Activated naive CD4-positive, alpha-beta T cell treated with anti-CD3 and anti-CD28 coated beads for 36 hours (primary cell): ENCODE measurements at regions of chr6 and their contacts with region 1.

Region 1: DNA sequence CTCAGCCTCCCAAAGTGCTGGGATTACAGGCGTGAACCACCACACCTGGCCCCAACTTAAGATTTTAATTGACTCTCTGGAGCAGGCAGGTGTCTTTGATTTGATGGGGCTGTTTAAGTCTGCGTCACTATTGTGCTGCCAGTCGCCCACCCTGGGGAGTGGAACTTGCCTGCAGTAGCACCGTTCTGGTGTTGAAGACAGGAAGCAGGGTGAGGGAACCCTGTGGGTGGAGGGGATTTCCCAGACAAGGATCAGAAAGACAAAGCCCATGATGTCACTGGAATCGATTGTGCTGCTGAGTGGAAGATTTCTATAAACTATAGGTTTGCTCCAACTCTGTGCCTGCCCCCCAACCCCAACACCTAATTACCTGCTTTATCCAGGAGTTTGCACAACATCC is 11.0 kb downstream of the ALDH8A1 start:
- DNase-seq: peak; percentile 85
- H3K4me3 Mint-ChIP-seq: no peak overlapping the region
- H3K27ac Mint-ChIP-seq: no peak overlapping the region
- H3K4me1 Mint-ChIP-seq: peaks cover 21% of the 10 kb centered on the region
- H3K27me3 Mint-ChIP-seq: no peaks in the 10 kb centered on the region

Region 2: DNA sequence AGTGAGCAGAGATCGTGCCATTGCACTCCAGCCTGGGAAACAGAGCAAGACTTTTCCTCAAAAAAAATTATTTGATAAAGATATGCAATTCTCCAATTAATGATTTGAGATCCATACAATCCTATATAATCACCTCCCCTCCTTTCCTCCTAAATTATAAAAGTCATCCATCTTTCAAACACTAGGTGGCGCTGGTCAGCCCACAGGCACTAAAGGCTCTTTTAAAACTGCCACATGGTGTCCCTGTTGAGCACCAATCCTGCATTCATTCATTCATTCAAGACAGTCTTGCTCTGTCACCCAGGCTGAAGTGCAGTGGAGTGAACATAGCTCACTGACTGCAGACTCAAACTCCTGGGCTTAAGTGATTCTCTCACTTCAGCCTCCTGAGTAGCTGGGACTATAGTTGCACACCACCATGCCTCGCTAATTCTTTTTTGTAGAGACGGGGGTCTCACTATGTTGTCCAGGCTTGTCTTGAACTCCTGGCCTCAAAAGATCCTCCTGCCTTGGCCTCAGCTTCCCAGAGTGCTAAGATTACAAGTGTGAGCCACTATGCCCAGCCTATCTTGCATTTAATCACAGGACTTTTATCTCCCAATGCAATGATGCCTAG is 827.7 kb before region 1 on chr6:
- CTCF ChIA-PET with region 1: interaction called, 18 read pairs
- intact Hi-C with region 1: loop called (anchors 1 kb)
- DNase-seq: peak; percentile 65
- H3K4me3 Mint-ChIP-seq: no peak overlapping the region
- H3K27ac Mint-ChIP-seq: no peak overlapping the region
- H3K4me1 Mint-ChIP-seq: peaks cover 2% of the 10 kb centered on the region
- H3K27me3 Mint-ChIP-seq: peaks cover 11% of the 10 kb centered on the region

Region 3: GRCh38 chr6:134161036-134161435 is 777.9 kb before region 1 on chr6:
- CTCF ChIA-PET with region 1: interaction called, 23 read pairs
- intact Hi-C with region 1: loop called (anchors 1 kb)
- DNase-seq: no peak
- H3K4me3 Mint-ChIP-seq: no peak overlapping the region
- H3K27ac Mint-ChIP-seq: no peak overlapping the region
- H3K4me1 Mint-ChIP-seq: peaks cover 4% of the 10 kb centered on the region
- H3K27me3 Mint-ChIP-seq: no peaks in the 10 kb centered on the region

Region 4: GRCh38 chr6:134882426-134883038 is 56.4 kb before region 1 on chr6:
- CTCF ChIA-PET with region 1: interaction called, 36 read pairs
- intact Hi-C with region 1: loop called (anchors 2 kb)
- DNase-seq: peak; percentile 80
- H3K4me3 Mint-ChIP-seq: no peak overlapping the region
- H3K27ac Mint-ChIP-seq: no peak overlapping the region
- H3K4me1 Mint-ChIP-seq: no peaks in the 10 kb centered on the region
- H3K27me3 Mint-ChIP-seq: peaks cover 10% of the 10 kb centered on the region

Region 5: GRCh38 chr6:135438907-135439535 is 500.1 kb after region 1 on chr6:
- CTCF ChIA-PET with region 1: interaction called, 4 read pairs
- intact Hi-C with region 1: loop called (anchors 2 kb)
- DNase-seq: no peak
- H3K4me3 Mint-ChIP-seq: peak overlapping the region; percentile 7
- H3K27ac Mint-ChIP-seq: no peak overlapping the region
- H3K4me1 Mint-ChIP-seq: peaks cover 22% of the 10 kb centered on the region
- H3K27me3 Mint-ChIP-seq: no peaks in the 10 kb centered on the region